ENCODE measurements at regions of chr17 and their contacts with region 1.

Region 1: GRCh38 chr17:20009302-20010098 is at the start of gene SPECC1:
- DNase-seq: peak; percentile 48
- ATAC-seq: peak; percentile 90
- H3K4me3 ChIP-seq: peak within 1 kb of the TSS; percentile 70 to 87
- H3K27ac ChIP-seq: peak within 1 kb of the TSS; percentile 96
- H3K4me1 ChIP-seq: no peaks in the 10 kb centered on the region; the same call in 1 of the 2 replicates
- H3K27me3 ChIP-seq: no peaks in the 10 kb centered on the region
- CTCF ChIP-seq: peak; percentile 99
- total RNA-seq, gene SPECC1: 80.8 TPM

Region 2: DNA sequence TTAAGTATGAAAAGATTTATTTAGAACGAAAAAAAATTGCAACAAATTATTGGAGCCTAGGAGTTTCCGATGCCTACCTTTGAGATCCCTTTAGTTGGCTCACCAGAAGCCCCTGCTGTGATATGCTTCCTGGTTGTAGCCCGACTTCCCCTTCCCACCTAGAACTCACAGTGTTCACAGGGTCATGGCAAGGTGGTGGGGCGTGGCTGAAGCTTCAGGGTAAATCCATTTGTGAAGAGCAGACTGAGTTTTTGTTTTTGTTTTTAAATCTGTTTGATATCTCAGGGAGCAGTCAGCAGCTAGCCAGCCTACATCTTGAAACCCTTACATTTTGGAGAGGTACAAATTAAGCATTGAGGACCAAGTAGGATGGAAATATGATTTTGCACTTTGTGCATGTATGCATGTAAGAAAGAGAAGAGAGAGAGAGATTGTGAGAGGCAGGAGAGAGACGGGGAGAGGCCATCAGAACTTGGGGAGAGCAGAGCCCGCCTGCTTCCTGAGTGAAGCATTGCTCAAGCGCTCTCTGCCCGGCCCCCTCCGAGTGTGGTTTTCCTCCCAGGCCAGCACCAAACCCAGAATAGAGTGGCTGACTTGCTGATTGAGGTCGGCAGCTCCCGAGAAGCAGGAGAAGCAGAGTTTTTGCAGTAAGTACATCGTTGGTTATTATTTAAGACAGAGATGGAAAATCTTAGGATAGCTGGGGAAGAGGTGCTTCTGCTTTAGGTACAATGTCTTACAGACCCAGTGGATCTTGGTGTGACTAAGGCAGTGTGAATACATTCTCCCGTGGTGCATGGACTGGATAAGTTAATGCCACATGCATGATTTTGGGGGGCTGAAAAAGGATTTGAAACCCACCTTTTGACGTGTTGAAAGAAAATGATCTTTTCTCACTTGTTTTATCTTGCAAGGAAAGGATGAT is 63.8 kb after region 1 on chr17:
- CTCF ChIA-PET with region 1: no interaction called
- POLR2A ChIA-PET with region 1: no interaction called
- in situ Hi-C with region 1: no loop called
- intact Hi-C with region 1: no loop called
- DNase-seq: no peak
- ATAC-seq: peak; percentile 70
- H3K4me3 ChIP-seq: peak overlapping the region in 1 of 2 experiments; percentile 6; a peak in 2 of 4 replicates
- H3K27ac ChIP-seq: peak overlapping the region; percentile 83
- H3K4me1 ChIP-seq: peaks cover 36% of the 10 kb centered on the region
- H3K27me3 ChIP-seq: no peaks in the 10 kb centered on the region
- CTCF ChIP-seq: no peak

Region 3: GRCh38 chr17:20091174-20092029 is 81.9 kb after region 1 on chr17:
- CTCF ChIA-PET with region 1: no interaction called
- POLR2A ChIA-PET with region 1: interaction called, 13 read pairs
- in situ Hi-C with region 1: no loop called
- intact Hi-C with region 1: loop called (anchors 5 kb)
- DNase-seq: no peak
- ATAC-seq: no peak
- H3K4me3 ChIP-seq: no peak overlapping the region
- H3K27ac ChIP-seq: peak overlapping the region; percentile 85
- H3K4me1 ChIP-seq: peaks cover 58% of the 10 kb centered on the region
- H3K27me3 ChIP-seq: no peaks in the 10 kb centered on the region
- CTCF ChIP-seq: no peak

Region 4: GRCh38 chr17:20097330-20097729 is 87.8 kb after region 1 on chr17:
- CTCF ChIA-PET with region 1: no interaction called
- POLR2A ChIA-PET with region 1: interaction called, 11 read pairs
- in situ Hi-C with region 1: no loop called
- intact Hi-C with region 1: loop called (anchors 5 kb)
- DNase-seq: no peak
- ATAC-seq: no peak
- H3K4me3 ChIP-seq: no peak overlapping the region
- H3K27ac ChIP-seq: no peak overlapping the region
- H3K4me1 ChIP-seq: peaks cover 33% of the 10 kb centered on the region
- H3K27me3 ChIP-seq: no peaks in the 10 kb centered on the region
- CTCF ChIP-seq: no peak

Region 5: DNA sequence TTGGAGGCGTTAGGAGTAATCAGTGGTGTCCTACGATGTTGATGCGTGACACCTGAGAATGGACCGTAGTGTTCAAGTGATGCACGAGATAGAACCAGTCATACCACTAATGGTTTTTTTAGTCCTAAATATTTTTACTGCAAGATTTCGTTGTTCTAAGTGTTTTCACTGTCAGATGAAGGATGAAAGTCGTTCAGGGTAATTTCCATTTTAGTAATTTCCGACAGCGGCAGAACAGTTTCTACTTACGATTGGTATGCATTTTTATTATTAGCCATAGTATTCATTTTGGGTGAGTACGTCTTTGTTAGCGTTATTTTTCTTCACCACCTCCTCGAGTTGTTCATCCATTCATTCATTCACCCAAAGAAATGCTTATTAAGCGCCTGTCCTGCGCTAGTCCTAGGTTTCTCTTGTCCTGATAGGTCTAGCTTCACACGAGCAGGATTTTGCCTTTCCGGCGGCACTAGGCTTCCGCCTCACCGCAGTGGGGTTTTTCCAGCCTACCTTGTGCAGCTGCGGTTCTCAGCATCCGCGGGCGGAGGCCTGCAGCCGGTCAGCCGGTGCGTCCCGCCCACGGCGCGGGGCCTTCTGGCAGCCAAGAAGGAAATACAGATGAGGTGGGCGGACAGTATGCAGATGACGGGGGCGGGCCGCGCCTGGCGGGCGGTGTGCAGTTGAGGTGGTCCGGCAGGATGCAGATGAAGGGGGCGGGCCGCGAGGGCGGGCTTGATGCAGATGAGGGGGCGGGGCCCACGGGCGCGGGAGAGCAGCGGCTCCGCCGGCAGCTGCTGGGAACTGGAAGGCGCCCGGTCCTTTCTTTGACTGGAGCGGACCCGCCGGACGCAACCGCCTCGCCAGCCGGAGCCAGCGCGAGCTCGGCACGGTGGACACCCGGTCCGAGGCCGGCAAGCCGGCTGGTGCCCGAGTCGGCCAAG is 146.0 kb after region 1 on chr17:
- CTCF ChIA-PET with region 1: no interaction called
- POLR2A ChIA-PET with region 1: interaction called, 11 read pairs
- in situ Hi-C with region 1: no loop called
- intact Hi-C with region 1: no loop called
- DNase-seq: peak; percentile 69
- ATAC-seq: peak; percentile 98
- H3K4me3 ChIP-seq: peak overlapping the region; percentile 59 to 63
- H3K27ac ChIP-seq: peak overlapping the region; percentile 81
- H3K4me1 ChIP-seq: peaks cover 17% of the 10 kb centered on the region
- H3K27me3 ChIP-seq: no peaks in the 10 kb centered on the region
- CTCF ChIP-seq: no peak

Measured in Panc1 (cell line).